MCF 10A (cell line): ENCODE measurements at regions of chr2 and their contacts with region 1.

Region 1: GRCh38 chr2:182302174-182302573 is 124.7 kb downstream of the PDE1A start:
- DNase-seq: peak; percentile 71
- H3K4me3 Mint-ChIP-seq: no peak overlapping the region
- H3K27ac Mint-ChIP-seq: no peak overlapping the region
- H3K4me1 Mint-ChIP-seq: peaks cover 31% of the 10 kb centered on the region
- H3K27me3 Mint-ChIP-seq: no peaks in the 10 kb centered on the region
- CTCF ChIP-seq: no peak

Region 2: DNA sequence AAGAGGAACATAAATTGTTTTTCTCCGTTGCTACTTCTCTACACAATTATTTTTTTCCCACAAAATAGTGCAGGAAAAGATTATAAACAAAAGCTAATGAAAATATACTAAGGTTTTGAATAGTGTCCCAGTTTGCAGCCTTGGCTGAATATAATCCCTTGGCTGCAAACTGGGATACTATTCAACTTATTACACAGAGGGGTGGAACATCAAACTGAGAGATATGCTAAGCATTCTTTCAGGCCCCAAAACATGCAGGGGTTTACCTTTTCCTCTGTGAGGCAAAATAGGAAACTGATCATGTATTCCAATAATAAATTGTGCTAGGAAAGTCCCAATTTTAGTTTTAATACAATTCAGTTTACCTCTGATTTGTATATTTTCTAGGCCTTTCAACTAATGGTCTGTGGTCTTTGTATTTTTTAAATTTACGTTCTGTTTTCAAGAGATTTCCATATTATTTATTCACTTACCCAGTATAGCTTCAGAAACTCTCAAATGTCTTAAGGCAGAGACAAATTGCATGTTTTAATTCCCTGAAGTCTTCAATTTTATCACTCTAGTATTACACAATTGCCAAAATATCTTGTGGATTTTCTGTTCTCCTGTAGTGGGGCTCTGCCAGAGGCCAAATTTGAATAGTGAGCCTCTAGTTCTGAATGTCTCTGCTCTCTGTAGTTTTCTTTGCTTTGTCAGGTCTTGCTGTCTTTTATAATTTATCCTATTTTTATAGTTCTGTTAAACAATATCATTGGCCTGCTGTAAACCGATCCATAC is 252.6 kb before region 1 on chr2:
- CTCF ChIA-PET with region 1: no interaction called
- POLR2A ChIA-PET with region 1: no interaction called
- intact Hi-C with region 1: no loop called
- DNase-seq: no peak
- H3K4me3 Mint-ChIP-seq: no peak overlapping the region
- H3K27ac Mint-ChIP-seq: no peak overlapping the region
- H3K4me1 Mint-ChIP-seq: no peaks in the 10 kb centered on the region
- H3K27me3 Mint-ChIP-seq: no peaks in the 10 kb centered on the region
- CTCF ChIP-seq: no peak

Region 3: DNA sequence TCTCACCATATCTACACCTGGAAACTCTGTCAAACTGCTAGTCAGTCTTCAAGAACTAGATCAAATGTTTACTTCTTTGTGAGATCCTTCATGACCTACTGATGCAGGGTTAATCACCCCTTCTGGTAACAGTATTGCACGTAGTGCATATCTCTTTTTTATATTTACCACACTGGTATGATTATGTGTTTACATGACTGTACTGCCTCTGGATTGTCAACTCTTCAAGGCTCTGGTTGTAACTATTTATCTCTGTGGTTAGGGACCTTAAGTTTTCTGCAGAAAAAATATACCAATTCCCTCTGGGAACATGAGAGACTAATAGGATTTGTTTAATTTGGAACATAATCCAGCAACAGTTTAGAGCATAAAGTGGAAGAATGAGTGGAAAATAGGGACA is 10.9 kb before region 1 on chr2:
- CTCF ChIA-PET with region 1: interaction called, 4 read pairs
- POLR2A ChIA-PET with region 1: no interaction called
- intact Hi-C with region 1: loop called (anchors 1 kb)
- DNase-seq: no peak
- H3K4me3 Mint-ChIP-seq: no peak overlapping the region
- H3K27ac Mint-ChIP-seq: no peak overlapping the region
- H3K4me1 Mint-ChIP-seq: no peaks in the 10 kb centered on the region
- H3K27me3 Mint-ChIP-seq: no peaks in the 10 kb centered on the region
- CTCF ChIP-seq: no peak